Aorta (tissue), 5 donors: ENCODE measurements at regions of chr1 and their contacts with region 1.

Region 1: DNA sequence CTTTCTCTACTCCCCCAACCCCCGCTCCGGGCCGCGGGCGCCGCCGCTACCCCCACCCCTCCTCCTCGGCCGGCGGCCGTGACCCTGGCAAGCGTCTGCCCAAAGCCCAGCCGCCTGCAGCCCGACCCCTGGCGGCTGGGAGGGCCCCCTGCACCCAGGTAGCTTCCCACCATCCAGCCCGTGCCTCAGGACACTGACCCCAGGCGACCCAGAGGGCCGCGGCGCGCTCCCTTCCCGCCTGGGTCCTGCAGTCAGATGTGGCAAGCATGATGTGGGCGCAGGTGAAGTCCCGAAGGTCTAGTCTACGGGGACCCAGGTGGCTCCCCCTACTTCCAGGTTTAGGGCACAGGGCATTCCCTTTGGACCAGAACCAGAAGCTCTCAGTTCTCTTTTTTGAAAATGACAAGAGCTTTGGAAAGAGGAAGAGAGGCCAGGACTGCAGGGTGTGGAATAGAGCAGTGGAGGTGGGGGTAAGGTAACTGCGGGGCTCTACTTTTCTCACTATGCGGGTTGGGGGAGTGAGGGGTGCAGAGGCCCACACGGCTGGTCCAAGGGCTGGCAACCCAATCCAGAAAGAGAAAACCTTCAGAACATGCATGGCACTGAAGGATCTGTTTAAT is at the start of gene DENND4B:
- DNase-seq: peak; percentile 92 to 94
- ATAC-seq: peak; percentile 92
- H3K4me3 ChIP-seq: peak within 1 kb of the TSS; percentile 93 to 97
- H3K27ac ChIP-seq: peak within 1 kb of the TSS; percentile 47 to 76
- H3K4me1 ChIP-seq: no peaks in the 10 kb centered on the region
- H3K27me3 ChIP-seq: no peaks in the 10 kb centered on the region
- total RNA-seq, gene DENND4B: 45.7 to 94.7 TPM

Region 2: DNA sequence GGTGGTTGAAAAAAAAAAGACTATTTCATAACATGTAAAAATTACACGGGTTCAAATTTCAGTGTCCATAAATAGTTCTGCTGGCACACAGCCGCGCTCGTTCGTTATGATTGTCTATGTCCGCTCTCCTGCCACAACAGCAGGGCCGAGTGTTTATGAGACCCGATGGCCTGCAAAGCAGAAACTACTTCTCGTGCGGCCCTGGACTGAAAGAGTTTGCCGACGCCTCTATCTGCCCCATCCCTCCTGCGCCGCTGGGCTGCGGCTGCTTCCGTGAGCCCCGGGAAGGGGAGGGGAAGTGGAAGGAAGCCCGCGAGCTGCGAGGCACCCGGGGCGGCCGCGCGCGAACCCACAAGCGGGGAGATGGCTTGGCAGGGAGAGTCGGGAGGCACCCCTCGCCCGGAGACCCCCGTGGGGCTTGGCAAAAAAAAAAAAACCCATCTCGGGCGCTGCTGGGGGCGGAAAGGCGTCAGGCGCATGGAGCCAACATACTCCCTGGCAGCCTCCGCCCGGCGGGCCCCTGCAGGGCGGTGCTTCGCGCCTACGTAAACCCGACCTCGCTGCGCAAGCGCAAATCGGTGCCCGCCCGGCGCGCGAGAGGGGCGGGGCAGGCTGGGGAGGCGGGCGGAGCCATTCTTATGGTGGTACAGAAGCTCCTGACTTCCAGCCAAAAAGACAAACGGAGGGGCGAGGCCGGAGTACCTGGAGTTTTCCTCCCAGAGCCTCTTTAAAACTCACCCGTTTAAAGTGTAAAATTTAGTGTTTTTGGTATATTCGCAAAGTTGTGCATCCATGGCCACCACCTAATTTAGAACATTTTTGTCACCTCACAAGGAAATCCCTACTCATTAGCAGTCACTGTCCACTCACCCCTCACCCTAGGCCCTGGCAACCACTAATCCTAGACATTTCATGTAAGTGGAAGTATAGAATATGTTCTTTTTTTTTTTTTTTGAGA is 163.2 kb before region 1 on chr1:
- intact Hi-C with region 1: no loop called
- DNase-seq: peak; percentile 95 to 97
- ATAC-seq: peak; percentile 98
- H3K4me3 ChIP-seq: peak overlapping the region; percentile 14 to 61
- H3K27ac ChIP-seq: peak overlapping the region; percentile 67 to 72
- H3K4me1 ChIP-seq: no peaks in the 10 kb centered on the region
- H3K27me3 ChIP-seq: no peaks in the 10 kb centered on the region

Region 3: GRCh38 chr1:153796791-153797659 is 149.7 kb before region 1 on chr1:
- intact Hi-C with region 1: loop called in 1 of 2 experiments (anchors 5 kb)
- DNase-seq: peak; percentile 83 to 87
- ATAC-seq: peak; percentile 71
- H3K4me3 ChIP-seq: no peak overlapping the region
- H3K27ac ChIP-seq: no peak overlapping the region
- H3K4me1 ChIP-seq: no peaks in the 10 kb centered on the region
- H3K27me3 ChIP-seq: no peaks in the 10 kb centered on the region

Region 4: GRCh38 chr1:153816283-153816889 is 130.3 kb before region 1 on chr1:
- intact Hi-C with region 1: loop called (anchors 2 kb)
- DNase-seq: no peak
- ATAC-seq: no peak
- H3K4me3 ChIP-seq: no peak overlapping the region
- H3K27ac ChIP-seq: peak overlapping the region in 1 of 2 donors; percentile 23
- H3K4me1 ChIP-seq: peaks cover 0 to 3% of the 10 kb centered on the region in 2 donors
- H3K27me3 ChIP-seq: no peaks in the 10 kb centered on the region

Region 5: DNA sequence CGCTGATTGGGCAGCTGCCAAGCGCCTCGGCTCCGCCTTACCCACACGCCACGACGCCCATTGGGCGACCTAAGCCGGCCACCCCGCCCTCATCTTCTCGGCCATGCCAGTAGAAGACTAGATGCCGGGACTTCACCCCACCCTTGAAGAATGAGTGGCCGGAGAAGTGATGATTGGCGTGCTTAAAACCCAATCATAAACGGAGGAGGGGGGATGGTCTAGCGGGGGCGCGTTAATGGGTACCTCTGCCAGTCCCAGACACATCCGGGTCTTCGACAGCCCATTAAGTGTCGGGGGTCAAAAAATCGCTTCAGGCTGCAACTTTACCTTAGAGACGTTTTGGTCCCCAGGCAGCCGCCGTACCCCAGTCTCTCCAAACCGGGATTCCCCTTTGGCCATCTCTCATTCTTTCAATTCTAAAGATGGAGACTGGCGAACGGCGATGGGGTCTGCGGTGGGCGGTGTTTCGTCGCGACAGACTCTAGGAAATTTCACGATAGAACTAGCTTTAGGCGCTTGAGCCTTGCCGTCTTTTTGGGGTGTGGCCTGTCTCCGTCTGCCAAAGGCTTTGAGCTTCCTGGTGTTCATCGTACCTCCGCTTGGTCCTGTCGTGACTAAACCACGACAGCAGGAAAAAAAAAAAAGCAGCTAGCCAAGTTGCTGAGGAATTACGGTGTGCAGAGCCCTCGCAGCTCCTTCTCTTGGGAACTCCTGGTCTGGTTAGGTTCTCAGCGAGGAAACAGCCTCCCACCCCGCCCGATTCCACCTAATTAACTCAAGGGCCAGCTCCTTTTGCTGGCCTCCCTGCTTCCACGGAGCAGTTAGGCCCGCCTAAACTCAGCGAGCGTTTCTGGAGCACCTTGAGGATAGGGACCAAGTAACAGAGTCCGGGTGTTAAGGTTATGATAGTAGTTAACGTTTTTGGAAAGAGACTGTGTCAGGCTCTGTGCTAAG is 23.5 kb before region 1 on chr1 and contains the start of gene GATAD2B:
- intact Hi-C with region 1: loop called in 1 of 2 experiments (anchors 1 kb)
- DNase-seq: peak; percentile 100
- ATAC-seq: peak; percentile 98
- H3K4me3 ChIP-seq: peak within 1 kb of the TSS; percentile 82 to 91
- H3K27ac ChIP-seq: peak within 1 kb of the TSS; percentile 72 to 77
- H3K4me1 ChIP-seq: peaks cover 0 to 4% of the 10 kb centered on the region in 2 donors
- H3K27me3 ChIP-seq: no peaks in the 10 kb centered on the region
- total RNA-seq, gene GATAD2B: 52.3 to 67.8 TPM

Region 6: DNA sequence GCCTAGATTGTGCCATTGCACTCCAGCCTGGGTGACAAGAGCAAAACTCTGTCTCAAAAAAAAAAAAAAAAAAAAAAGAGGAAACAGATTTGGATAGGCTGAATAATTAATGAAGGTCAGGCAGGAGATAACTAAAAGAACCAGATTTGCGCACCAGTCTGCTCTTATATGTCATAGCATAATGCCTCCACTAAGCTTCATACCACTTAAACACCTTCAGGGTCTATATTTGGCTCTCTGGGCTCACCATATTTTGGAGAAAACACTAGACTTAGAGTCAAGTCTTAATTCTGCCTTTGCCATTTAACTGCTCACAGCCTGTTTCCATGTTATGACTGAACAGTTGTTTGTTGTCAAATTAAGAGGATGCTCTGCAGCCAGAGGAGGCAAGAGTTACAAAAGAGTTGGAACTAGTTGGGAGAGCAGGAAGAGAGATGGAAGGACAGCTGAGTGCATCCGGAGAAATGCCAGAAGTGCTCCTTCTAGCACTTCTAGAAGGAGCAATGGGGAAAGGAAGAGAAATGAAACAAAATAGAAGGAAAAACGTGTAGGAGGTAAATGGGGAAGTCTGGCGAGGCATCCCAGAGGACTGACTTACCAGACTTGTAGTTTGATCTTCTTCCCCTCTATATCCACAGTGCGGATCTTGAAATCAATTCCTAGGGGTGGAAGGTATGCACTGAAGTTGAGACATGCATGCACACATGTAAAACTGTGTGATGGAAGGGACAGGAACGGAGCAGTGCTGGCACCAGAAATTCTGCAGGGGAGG is 37.6 kb after region 1 on chr1:
- intact Hi-C with region 1: loop called in 1 of 2 experiments (anchors 5 kb)
- DNase-seq: no peak
- ATAC-seq: no peak
- H3K4me3 ChIP-seq: no peak overlapping the region
- H3K27ac ChIP-seq: no peak overlapping the region
- H3K4me1 ChIP-seq: peaks cover 0 to 3% of the 10 kb centered on the region in 2 donors
- H3K27me3 ChIP-seq: no peaks in the 10 kb centered on the region